Naive thymus-derived CD4-positive, alpha-beta T cell (primary cell): ENCODE measurements at regions of chr2 and their contacts with region 1.

Region 1: GRCh38 chr2:178193823-178194599 is at the start of gene OSBPL6:
- DNase-seq: peak; percentile 10 to 82 (median 41)
- ATAC-seq: peak; percentile 87
- H3K4me3 ChIP-seq: peak within 1 kb of the TSS; percentile 46
- H3K4me3 Mint-ChIP-seq: peak within 1 kb of the TSS; percentile 56 to 83 (median 77)
- H3K27ac ChIP-seq: no peak within 1 kb of the TSS
- H3K27ac Mint-ChIP-seq: no peak within 1 kb of the TSS
- H3K4me1 ChIP-seq: peaks cover 6% of the 10 kb centered on the region in 2 donors
- H3K4me1 Mint-ChIP-seq: peaks cover 6 to 19% (median 13%) of the 10 kb centered on the region in 7 donors
- H3K27me3 ChIP-seq: peaks cover 18% of the 10 kb centered on the region in 2 donors
- H3K27me3 Mint-ChIP-seq: peaks cover 45 to 59% (median 54%) of the 10 kb centered on the region in 5 donors
- total RNA-seq, gene OSBPL6: 0.05 to 1.1 (median 0.44) TPM in 4 of 5 experiments, not detected in the other

Region 2: DNA sequence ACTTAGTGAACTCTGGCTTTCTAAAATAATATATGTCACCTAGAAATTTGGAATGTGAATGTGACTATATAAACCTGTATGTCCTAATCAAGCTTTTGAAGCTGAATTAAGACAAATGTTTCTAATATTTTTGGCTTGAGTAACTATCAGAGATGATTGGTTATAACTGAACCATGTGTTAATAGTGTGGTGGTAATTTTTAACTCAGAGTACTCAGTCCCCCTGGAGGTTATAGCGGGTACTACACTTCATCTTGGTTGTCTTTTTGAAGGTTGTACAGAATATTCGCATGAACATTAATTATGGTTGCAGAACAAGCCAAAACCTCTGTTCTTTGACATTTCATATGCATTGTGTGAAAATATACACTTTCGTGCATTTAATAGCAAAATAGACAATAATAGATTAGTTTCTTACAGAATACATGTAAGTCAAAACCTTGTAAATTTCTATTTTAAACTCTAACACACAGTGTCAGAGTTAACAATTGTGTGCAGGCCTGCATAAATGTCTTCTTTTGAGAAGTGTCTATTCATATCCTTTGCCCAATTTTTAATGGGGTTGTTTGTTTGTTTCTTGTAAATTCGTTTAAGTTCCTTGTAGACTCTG is 86.3 kb after region 1 on chr2:
- CTCF ChIA-PET with region 1: no interaction called
- POLR2A ChIA-PET with region 1: no interaction called
- intact Hi-C with region 1: loop called in 1 of 2 experiments (anchors 5 kb)
- DNase-seq: peak in 7 of 9 donors; percentile 3 to 45 (median 33)
- ATAC-seq: peak; percentile 85
- H3K4me3 ChIP-seq: no peak overlapping the region
- H3K4me3 Mint-ChIP-seq: no peak overlapping the region
- H3K27ac ChIP-seq: no peak overlapping the region
- H3K27ac Mint-ChIP-seq: no peak overlapping the region
- H3K4me1 ChIP-seq: no peaks in the 10 kb centered on the region
- H3K4me1 Mint-ChIP-seq: no peaks in the 10 kb centered on the region
- H3K27me3 ChIP-seq: no peaks in the 10 kb centered on the region
- H3K27me3 Mint-ChIP-seq: peaks cover 13 to 24% (median 19%) of the 10 kb centered on the region in 5 donors

Region 3: DNA sequence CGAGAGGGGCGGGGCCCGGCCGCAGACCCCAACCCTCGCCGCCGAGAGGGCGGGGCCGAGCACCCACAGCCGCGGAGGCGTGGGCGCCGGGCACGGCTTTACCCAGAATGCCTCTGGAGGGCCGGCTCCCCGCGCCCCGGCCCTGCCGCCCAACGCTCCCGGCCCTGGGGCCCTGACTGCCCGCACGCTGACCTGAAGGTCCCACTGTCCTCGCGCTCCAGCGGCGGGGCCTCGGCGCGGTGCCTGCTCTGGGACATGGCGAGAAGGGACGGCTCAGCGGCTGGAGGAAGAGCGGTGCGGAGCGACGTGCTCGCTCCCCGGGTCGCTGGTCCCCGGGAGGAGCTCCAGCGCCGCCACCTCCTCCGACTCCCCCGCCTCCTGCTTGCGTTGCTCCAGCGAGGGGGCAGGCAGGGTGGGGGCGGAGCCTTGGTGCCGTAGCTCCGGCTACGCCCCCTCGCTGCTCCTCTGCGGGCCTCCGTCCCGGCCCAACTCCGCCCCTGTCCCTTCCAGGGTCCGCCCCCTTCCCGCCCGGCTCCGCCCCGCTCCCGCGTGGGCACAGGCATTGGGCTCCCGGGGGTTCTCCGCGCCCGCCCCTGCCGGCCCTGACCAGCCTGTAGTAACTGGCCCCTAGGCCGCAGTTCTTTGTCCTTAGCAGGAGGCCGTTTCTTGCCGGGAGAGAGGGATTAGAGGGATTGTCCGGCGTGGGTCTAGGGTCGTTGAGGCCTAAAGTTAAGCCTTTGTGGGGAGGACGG is 256.9 kb after region 1 on chr2 and contains the starts of genes PJVK and PRKRA:
- CTCF ChIA-PET with region 1: no interaction called
- POLR2A ChIA-PET with region 1: no interaction called
- intact Hi-C with region 1: loop called in 1 of 2 experiments (anchors 1 kb)
- DNase-seq: peak; percentile 92 to 99 (median 93)
- ATAC-seq: peak; percentile 94
- H3K4me3 ChIP-seq: peak within 1 kb of the TSS; percentile 94
- H3K4me3 Mint-ChIP-seq: peak within 1 kb of the TSS; percentile 90 to 96 (median 90)
- H3K27ac ChIP-seq: peak within 1 kb of the TSS; percentile 100
- H3K27ac Mint-ChIP-seq: peak within 1 kb of the TSS; percentile 88 to 98 (median 95)
- H3K4me1 ChIP-seq: peaks cover 12 to 25% of the 10 kb centered on the region in 2 donors
- H3K4me1 Mint-ChIP-seq: peaks cover 12 to 36% (median 30%) of the 10 kb centered on the region in 7 donors
- H3K27me3 ChIP-seq: no peaks in the 10 kb centered on the region
- H3K27me3 Mint-ChIP-seq: peaks cover 0 to 9% (median 0%) of the 10 kb centered on the region in 5 donors
- total RNA-seq, gene PJVK: 2.1 to 6.3 (median 3.8) TPM
- total RNA-seq, gene PRKRA: 40.8 to 113 (median 59.4) TPM

Region 4: GRCh38 chr2:178522950-178523595 is 329.1 kb after region 1 on chr2:
- CTCF ChIA-PET with region 1: no interaction called
- POLR2A ChIA-PET with region 1: no interaction called
- intact Hi-C with region 1: loop called in 1 of 2 experiments (anchors 10 kb)
- DNase-seq: peak; percentile 65 to 85 (median 80)
- ATAC-seq: peak; percentile 100
- H3K4me3 ChIP-seq: peak overlapping the region; percentile 93
- H3K4me3 Mint-ChIP-seq: peak overlapping the region; percentile 84 to 96 (median 94)
- H3K27ac ChIP-seq: peak overlapping the region; percentile 75
- H3K27ac Mint-ChIP-seq: peak overlapping the region; percentile 80 to 96 (median 91)
- H3K4me1 ChIP-seq: peaks cover 7 to 10% of the 10 kb centered on the region in 2 donors
- H3K4me1 Mint-ChIP-seq: peaks cover 14 to 58% (median 22%) of the 10 kb centered on the region in 7 donors
- H3K27me3 ChIP-seq: no peaks in the 10 kb centered on the region
- H3K27me3 Mint-ChIP-seq: no peaks in the 10 kb centered on the region